ENCODE measurements at regions of chr2 and their contacts with region 1.

Region 1: GRCh38 chr2:13006829-13007717 is 290.3 kb downstream of the TRIB2 start:
- DNase-seq: peak; percentile 37
- H3K4me3 ChIP-seq: no peak overlapping the region
- H3K27ac ChIP-seq: no peak overlapping the region
- H3K27me3 ChIP-seq: no peaks in the 10 kb centered on the region
- CTCF ChIP-seq: peak; percentile 79

Region 2: GRCh38 chr2:11784747-11785610 is 1222.1 kb before region 1 on chr2:
- CTCF ChIA-PET with region 1: interaction called, 21 read pairs
- POLR2A ChIA-PET with region 1: no interaction called
- DNase-seq: no peak
- H3K4me3 ChIP-seq: peak overlapping the region; percentile 45
- H3K27ac ChIP-seq: no peak overlapping the region
- H3K27me3 ChIP-seq: no peaks in the 10 kb centered on the region
- CTCF ChIP-seq: peak; percentile 69

Region 3: GRCh38 chr2:11863513-11864328 is 1143.4 kb before region 1 on chr2:
- CTCF ChIA-PET with region 1: interaction called, 10 read pairs
- POLR2A ChIA-PET with region 1: no interaction called
- DNase-seq: peak; percentile 67
- H3K4me3 ChIP-seq: peak overlapping the region; percentile 48
- H3K27ac ChIP-seq: no peak overlapping the region
- H3K27me3 ChIP-seq: no peaks in the 10 kb centered on the region
- CTCF ChIP-seq: peak; percentile 98

Region 4: DNA sequence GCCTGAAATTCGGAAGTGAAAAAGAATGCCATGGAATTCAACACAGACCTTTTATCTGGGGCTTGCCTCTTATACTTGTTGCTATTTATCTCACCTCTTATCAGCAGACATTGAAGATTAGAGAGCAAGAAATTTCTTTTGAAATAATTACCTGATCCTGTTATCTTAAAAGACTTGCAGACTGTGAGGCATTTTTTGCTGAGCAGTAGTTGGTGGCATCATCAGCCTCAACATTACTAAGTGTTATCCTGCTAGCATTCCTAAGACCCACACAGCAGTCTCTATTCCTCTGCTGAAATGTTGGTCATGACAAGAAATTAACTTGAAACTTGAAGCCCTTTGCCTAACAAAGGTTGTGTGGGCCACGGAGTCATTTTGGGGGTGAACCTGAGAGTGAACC is 103.8 kb before region 1 on chr2:
- CTCF ChIA-PET with region 1: no interaction called
- POLR2A ChIA-PET with region 1: no interaction called
- DNase-seq: no peak
- H3K4me3 ChIP-seq: no peak overlapping the region
- H3K27ac ChIP-seq: no peak overlapping the region
- H3K27me3 ChIP-seq: no peaks in the 10 kb centered on the region
- CTCF ChIP-seq: no peak

Region 5: DNA sequence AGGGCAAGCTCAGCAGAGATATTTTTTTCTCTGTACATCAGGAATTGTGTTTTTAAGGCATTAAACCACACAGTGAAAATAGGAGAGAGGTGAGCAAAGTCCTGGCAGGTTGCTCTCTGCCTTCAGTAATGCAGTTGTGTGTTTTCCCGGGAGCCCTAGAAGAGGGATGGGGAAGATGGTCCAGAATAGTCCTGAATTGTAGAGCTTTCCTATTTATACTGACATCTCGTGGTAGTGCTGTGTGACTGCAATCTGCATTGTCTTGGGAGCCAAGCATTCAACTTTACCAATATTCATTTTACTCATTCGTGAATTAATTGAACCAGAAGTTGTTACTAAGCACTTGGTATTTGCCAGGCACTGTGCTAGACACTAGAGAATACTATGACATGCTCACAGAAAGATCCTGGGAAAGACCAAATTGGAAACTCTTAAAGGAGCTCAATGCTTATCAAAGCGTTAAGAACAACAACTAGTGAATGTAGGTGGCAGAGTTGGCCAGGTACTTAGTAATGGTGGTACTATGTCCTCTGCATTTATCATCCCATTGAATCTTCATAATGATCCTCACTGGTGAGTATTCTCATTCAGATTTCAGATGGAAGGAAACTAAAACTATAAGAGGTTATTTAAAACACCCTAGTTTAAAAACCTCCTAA is 75.8 kb before region 1 on chr2:
- CTCF ChIA-PET with region 1: interaction called, 22 read pairs
- POLR2A ChIA-PET with region 1: no interaction called
- DNase-seq: peak; percentile 30
- H3K4me3 ChIP-seq: no peak overlapping the region
- H3K27ac ChIP-seq: no peak overlapping the region
- H3K27me3 ChIP-seq: no peaks in the 10 kb centered on the region
- CTCF ChIP-seq: peak; percentile 94

Region 6: GRCh38 chr2:13021470-13021957 is 14.4 kb after region 1 on chr2:
- CTCF ChIA-PET with region 1: interaction called, 16 read pairs
- POLR2A ChIA-PET with region 1: no interaction called
- DNase-seq: no peak
- H3K4me3 ChIP-seq: no peak overlapping the region
- H3K27ac ChIP-seq: no peak overlapping the region
- H3K27me3 ChIP-seq: no peaks in the 10 kb centered on the region
- CTCF ChIP-seq: no peak

Region 7: DNA sequence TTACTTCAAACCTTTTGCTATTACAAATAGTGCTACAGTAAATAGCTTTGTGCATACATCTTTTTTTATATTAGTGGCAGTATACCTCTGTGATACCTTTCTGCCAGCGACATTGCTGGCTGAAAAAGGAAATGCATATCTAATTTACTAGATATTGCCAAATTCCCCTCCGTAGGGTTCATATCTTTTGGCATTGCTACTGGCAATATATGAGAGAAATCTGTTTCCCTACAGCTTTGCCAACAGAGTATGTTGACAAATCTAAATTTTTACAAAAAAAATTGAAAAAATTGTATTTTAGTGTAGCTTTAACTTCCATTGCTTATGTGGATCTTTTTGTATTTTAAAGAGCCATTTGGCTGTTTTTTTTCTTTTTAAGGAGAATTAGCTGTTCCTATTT is 136.4 kb after region 1 on chr2:
- CTCF ChIA-PET with region 1: no interaction called
- POLR2A ChIA-PET with region 1: no interaction called
- DNase-seq: no peak
- H3K4me3 ChIP-seq: no peak overlapping the region
- H3K27ac ChIP-seq: no peak overlapping the region
- H3K27me3 ChIP-seq: no peaks in the 10 kb centered on the region
- CTCF ChIP-seq: no peak